Mammary epithelial cell (primary cell): ENCODE measurements at regions of chr7 and their contacts with region 1.

Region 1: DNA sequence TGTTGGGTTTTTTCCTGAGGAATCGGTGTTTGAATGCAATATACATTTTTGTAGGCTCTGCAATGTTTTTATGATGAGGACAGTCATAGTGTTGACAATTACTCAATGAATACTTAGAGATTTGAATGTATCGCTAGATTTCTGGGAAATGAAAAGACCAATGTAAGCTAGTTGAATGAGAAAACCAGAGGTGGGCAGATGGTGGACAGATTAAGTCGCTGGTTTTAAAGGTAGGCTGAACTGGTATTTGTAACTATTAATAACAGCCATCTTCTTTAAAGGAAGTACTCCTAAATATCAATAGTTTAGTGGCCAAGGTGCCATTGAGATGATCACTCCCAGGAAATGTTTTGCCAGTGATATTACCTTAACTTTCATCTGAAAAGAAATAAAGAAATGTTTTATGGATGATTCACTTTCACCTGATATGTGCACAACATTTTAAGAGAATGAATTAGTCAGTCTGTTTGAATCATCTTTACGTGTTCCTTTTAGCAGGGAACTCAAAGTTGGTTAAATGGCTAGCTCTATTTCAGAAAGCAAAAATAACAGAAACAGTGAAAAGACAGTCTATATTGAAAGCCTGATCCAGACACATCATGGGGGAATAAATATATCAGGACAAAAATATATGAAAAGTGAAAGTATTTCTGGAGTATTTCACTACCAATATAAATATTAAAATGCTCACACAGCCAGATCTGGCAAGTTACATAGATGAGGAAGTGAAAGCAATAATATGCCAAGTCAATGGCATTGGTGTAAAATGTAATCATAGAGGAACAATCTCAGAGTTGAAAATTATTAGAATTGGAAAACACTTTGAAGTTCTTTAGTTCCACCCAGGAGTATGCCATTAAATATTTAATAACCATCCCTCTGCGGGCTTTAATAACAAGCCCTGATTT is 20.7 kb downstream of the MET start:
- DNase-seq: peak; percentile 83
- H3K4me3 ChIP-seq: peak overlapping the region in 1 of 3 experiments; percentile 7
- H3K27ac ChIP-seq: peak overlapping the region; percentile 93
- H3K4me1 ChIP-seq: peaks cover 58% of the 10 kb centered on the region
- H3K27me3 ChIP-seq: no peaks in the 10 kb centered on the region
- CTCF ChIP-seq: no peak

Region 2: GRCh38 chr7:116679500-116679899 is 13.2 kb before region 1 on chr7:
- CTCF ChIA-PET with region 1: no interaction called
- dilution Hi-C with region 1: no loop called
- in situ Hi-C with region 1: no loop called
- intact Hi-C with region 1: loop called (anchors 2 kb)
- DNase-seq: peak; percentile 97
- H3K4me3 ChIP-seq: peak overlapping the region in 1 of 3 experiments; percentile 12
- H3K27ac ChIP-seq: peak overlapping the region; percentile 99
- H3K4me1 ChIP-seq: peaks cover 47% of the 10 kb centered on the region
- H3K27me3 ChIP-seq: no peaks in the 10 kb centered on the region
- CTCF ChIP-seq: no peak

Region 3: GRCh38 chr7:116706668-116707126 is 14.0 kb after region 1 on chr7:
- CTCF ChIA-PET with region 1: interaction called, 5 read pairs
- dilution Hi-C with region 1: no loop called
- in situ Hi-C with region 1: no loop called
- intact Hi-C with region 1: loop called (anchors 1 kb)
- DNase-seq: peak; percentile 74
- H3K4me3 ChIP-seq: peak overlapping the region; percentile 22 to 52 (median 31)
- H3K27ac ChIP-seq: peak overlapping the region; percentile 90
- H3K4me1 ChIP-seq: peaks cover 76% of the 10 kb centered on the region
- H3K27me3 ChIP-seq: no peaks in the 10 kb centered on the region
- CTCF ChIP-seq: no peak